Naive thymus-derived CD4-positive, alpha-beta T cell (primary cell): ENCODE measurements at regions of chr3 and their contacts with region 1.

Region 1: DNA sequence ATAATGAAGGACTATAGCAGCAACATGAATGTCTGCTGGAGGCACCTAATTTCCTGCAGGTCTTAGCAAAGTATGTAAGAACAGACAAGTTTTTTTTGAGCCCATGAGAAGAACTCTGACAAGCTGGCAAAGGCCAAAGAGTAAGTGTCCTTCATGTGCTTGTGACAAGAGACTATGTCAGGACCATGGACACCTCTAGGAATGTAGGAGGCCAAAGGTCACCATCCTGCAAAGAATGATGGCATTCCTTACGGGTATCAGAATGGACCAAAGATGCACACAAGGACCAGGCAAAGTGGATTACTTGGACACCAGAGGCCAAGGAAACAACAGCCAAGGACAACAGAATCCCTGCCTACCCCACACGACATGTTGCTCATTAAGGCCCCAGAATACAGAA is 858.5 kb upstream of the CFAP20DC start:
- DNase-seq: no peak
- ATAC-seq: no peak
- H3K4me3 ChIP-seq: no peak overlapping the region
- H3K4me3 Mint-ChIP-seq: peak overlapping the region in 3 of 10 donors; percentile 23 to 50 (median 48)
- H3K27ac ChIP-seq: no peak overlapping the region
- H3K27ac Mint-ChIP-seq: peak overlapping the region in 6 of 9 donors; percentile 53 to 84 (median 66)
- H3K4me1 ChIP-seq: peaks cover 0 to 27% of the 10 kb centered on the region in 2 donors
- H3K4me1 Mint-ChIP-seq: peaks cover 3 to 90% (median 61%) of the 10 kb centered on the region in 7 donors
- H3K27me3 ChIP-seq: no peaks in the 10 kb centered on the region
- H3K27me3 Mint-ChIP-seq: no peaks in the 10 kb centered on the region

Region 2: DNA sequence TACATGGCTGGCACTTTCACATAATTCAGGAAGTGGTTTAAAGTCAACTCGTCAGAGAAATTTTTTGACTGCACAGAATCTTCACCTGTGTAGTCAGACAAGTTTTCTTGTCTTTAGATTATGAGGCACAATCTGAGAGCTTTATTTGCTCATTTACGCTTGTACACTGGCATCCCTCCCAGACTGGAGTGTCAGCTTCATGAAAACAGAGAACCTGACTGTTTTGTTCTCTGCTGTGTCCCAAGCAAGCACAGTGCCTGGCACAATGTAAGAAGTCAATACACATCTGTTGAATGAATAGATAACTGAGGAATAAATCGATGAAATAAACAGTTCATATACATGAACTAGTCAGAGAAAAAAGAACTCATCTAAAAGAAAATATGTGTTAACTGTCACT is 12.3 kb before region 1 on chr3:
- CTCF ChIA-PET with region 1: interaction called, 3 read pairs
- POLR2A ChIA-PET with region 1: interaction called, 3 read pairs
- intact Hi-C with region 1: loop called in 1 of 2 experiments (anchors 1 kb)
- DNase-seq: peak in 3 of 9 donors; percentile 11 to 33 (median 28)
- ATAC-seq: no peak
- H3K4me3 ChIP-seq: no peak overlapping the region
- H3K4me3 Mint-ChIP-seq: peak overlapping the region in 6 of 10 donors; percentile 3 to 66 (median 25)
- H3K27ac ChIP-seq: no peak overlapping the region
- H3K27ac Mint-ChIP-seq: peak overlapping the region in 8 of 9 donors; percentile 35 to 80 (median 68)
- H3K4me1 ChIP-seq: peaks cover 0 to 34% of the 10 kb centered on the region in 2 donors
- H3K4me1 Mint-ChIP-seq: peaks cover 17 to 91% (median 83%) of the 10 kb centered on the region in 7 donors
- H3K27me3 ChIP-seq: no peaks in the 10 kb centered on the region
- H3K27me3 Mint-ChIP-seq: no peaks in the 10 kb centered on the region